Dorsolateral prefrontal cortex (tissue), 120 donors: ENCODE measurements at regions of chr6 and their contacts with region 1.

Region 1: GRCh38 chr6:44074439-44075136 is 52.7 kb downstream of the MRPL14 start:
- DNase-seq: peak; percentile 69 to 87 (median 84)
- H3K4me3 ChIP-seq: peak overlapping the region in 55 of 59 donors; percentile 15 to 78 (median 65)
- H3K27ac ChIP-seq: peak overlapping the region in 55 of 59 donors; percentile 18 to 98 (median 88)
- H3K27me3 ChIP-seq: no peaks in the 10 kb centered on the region
- CTCF ChIP-seq: peak; percentile 70 to 97 (median 91)

Region 2: DNA sequence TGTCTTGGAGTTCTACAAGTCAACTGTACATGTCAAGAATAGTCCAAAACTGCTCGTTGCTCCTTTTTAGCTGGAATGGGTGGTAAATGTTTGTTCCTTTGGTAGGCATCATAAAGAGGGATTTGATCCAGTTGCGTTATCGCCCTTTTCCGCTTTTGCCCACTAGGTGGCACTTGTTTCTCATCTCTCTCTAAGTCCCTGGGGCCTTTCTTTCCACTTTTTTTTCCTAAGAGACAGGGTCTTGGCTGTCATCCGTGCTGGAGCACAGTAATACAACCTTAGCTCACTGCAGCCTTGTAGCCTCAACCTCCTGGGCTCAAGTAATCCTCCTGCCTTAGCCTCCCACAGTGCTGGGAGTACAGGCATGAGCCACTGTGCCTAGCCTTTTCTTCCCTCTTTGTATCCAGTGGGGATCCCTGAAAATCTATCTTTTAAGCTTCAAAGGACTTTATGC is 466.3 kb before region 1 on chr6:
- intact Hi-C with region 1: loop called (anchors 2 to 10 kb)
- DNase-seq: peak in 8 of 10 donors; percentile 32 to 92 (median 69)
- H3K4me3 ChIP-seq: no peak overlapping the region
- H3K27ac ChIP-seq: peak overlapping the region in 21 of 59 donors; percentile 2 to 68 (median 36)
- H3K27me3 ChIP-seq: no peaks in the 10 kb centered on the region
- CTCF ChIP-seq: peak; percentile 67 to 89 (median 81)

Region 3: GRCh38 chr6:43629505-43630300 is 444.9 kb before region 1 on chr6:
- intact Hi-C with region 1: loop called in 1 of 2 experiments (anchors 10 kb)
- DNase-seq: peak; percentile 61 to 93 (median 90)
- H3K4me3 ChIP-seq: peak overlapping the region; percentile 64 to 99 (median 94)
- H3K27ac ChIP-seq: peak overlapping the region; percentile 74 to 100 (median 97)
- H3K27me3 ChIP-seq: no peaks in the 10 kb centered on the region
- CTCF ChIP-seq: peak in 5 of 56 donors; percentile 0 to 9 (median 2)

Region 4: GRCh38 chr6:43746613-43747102 is 327.9 kb before region 1 on chr6:
- intact Hi-C with region 1: no loop called
- DNase-seq: peak in 1 of 10 donors; percentile 30
- H3K4me3 ChIP-seq: no peak overlapping the region
- H3K27ac ChIP-seq: no peak overlapping the region
- H3K27me3 ChIP-seq: peaks cover 0 to 2% (median 0%) of the 10 kb centered on the region in 45 donors
- CTCF ChIP-seq: no peak

Region 5: DNA sequence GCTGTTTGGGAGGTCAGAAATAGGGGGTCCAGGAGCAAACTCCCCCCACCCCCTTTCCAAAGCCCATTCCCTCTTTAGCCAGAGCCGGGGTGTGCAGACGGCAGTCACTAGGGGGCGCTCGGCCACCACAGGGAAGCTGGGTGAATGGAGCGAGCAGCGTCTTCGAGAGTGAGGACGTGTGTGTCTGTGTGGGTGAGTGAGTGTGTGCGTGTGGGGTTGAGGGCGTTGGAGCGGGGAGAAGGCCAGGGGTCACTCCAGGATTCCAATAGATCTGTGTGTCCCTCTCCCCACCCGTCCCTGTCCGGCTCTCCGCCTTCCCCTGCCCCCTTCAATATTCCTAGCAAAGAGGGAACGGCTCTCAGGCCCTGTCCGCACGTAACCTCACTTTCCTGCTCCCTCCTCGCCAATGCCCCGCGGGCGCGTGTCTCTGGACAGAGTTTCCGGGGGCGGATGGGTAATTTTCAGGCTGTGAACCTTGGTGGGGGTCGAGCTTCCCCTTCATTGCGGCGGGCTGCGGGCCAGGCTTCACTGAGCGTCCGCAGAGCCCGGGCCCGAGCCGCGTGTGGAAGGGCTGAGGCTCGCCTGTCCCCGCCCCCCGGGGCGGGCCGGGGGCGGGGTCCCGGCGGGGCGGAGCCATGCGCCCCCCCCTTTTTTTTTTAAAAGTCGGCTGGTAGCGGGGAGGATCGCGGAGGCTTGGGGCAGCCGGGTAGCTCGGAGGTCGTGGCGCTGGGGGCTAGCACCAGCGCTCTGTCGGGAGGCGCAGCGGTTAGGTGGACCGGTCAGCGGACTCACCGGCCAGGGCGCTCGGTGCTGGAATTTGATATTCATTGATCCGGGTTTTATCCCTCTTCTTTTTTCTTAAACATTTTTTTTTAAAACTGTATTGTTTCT is 304.8 kb before region 1 on chr6 and contains the start of gene VEGFA:
- intact Hi-C with region 1: loop called (anchors 1 kb)
- DNase-seq: peak; percentile 80 to 92 (median 90)
- H3K4me3 ChIP-seq: peak within 1 kb of the TSS; percentile 54 to 89 (median 77)
- H3K27ac ChIP-seq: peak within 1 kb of the TSS in 56 of 59 donors; percentile 21 to 97 (median 84)
- H3K27me3 ChIP-seq: no peaks in the 10 kb centered on the region
- CTCF ChIP-seq: peak; percentile 85 to 99 (median 95)
- total RNA-seq, gene VEGFA: 19.7 to 440 (median 56.8) TPM

Region 6: GRCh38 chr6:43883847-43884651 is 190.5 kb before region 1 on chr6:
- intact Hi-C with region 1: loop called (anchors 10 kb)
- DNase-seq: peak in 1 of 10 donors; percentile 20
- H3K4me3 ChIP-seq: no peak overlapping the region
- H3K27ac ChIP-seq: peak overlapping the region in 1 of 59 donors; percentile 40
- H3K27me3 ChIP-seq: no peaks in the 10 kb centered on the region
- CTCF ChIP-seq: no peak

Region 7: DNA sequence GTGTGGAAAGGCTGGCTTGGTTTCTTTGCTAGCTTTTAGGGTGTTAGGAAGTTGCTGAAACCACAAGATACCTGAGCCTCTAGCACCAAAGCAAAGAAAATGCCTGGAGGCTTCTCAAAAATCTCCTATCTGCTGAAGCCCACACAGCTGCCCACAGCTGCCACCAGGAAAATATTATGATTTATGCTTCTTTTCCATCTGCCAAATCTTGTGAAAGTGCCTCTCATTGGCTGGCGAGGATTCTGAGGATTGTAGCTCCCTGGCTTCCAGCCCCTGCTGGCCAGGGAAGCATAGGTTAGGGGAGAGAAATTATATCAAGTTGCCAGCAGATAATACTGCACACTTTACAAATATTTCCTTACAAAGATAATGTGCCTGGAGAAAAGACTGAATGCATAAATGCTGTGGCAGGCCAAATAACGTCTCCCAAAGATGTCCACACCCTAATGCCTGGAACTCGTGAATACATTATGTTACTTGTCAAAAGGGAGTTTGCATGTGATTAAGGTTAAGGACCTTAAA is 45.7 kb before region 1 on chr6:
- intact Hi-C with region 1: no loop called
- DNase-seq: no peak
- H3K4me3 ChIP-seq: no peak overlapping the region
- H3K27ac ChIP-seq: no peak overlapping the region
- H3K27me3 ChIP-seq: no peaks in the 10 kb centered on the region
- CTCF ChIP-seq: no peak

Region 8: DNA sequence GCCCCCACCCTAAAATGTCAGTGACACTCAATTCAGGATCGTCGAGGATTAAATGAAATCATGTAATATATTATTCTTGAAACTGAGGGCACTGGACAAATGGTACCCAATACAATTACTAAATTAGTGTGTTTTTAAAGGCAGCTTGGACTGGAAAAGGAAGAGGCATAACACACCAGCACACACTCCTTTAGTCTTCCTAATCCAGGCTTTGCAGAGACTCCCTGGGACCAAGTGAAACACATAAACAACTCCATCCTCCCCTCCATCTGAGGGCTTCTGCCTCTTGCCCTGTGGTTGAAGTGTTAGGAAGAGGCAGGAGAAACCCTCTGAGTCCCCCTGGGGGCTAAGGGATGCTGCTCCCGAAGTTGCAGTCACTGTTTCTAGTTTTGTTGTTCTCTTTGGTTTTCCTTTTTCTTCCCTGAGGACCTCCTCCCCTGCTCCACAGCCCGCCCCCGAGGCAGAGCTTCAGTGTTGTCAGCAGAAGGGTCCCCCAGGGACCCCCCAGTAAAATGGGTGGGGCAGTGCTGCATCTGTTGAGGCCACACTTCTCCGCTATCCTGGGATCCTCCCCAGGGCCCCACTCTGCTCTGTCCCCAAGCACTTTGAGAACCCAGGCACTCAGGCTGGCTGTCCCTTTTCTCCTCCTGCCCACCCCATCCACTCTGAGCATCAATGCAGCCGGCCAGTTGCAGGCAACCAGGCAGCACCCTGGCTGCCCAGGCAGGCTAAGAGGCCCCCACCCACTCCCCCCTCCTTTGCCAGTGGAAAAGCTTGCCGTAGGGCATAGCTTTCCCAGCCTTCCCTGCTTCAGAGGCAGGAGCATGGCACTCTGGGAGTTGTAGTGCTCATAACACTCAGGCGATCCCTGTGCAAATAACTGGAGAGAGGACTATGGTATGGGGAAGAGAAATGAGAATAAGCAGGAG is 58.7 kb after region 1 on chr6:
- intact Hi-C with region 1: no loop called
- DNase-seq: peak; percentile 45 to 84 (median 76)
- H3K4me3 ChIP-seq: peak overlapping the region in 39 of 59 donors; percentile 9 to 53 (median 28)
- H3K27ac ChIP-seq: peak overlapping the region in 48 of 59 donors; percentile 15 to 88 (median 66)
- H3K27me3 ChIP-seq: no peaks in the 10 kb centered on the region
- CTCF ChIP-seq: peak in 1 of 56 donors; percentile 8